GM12878 (cell line): ENCODE measurements at regions of chr19 and their contacts with region 1.

Region 1: DNA sequence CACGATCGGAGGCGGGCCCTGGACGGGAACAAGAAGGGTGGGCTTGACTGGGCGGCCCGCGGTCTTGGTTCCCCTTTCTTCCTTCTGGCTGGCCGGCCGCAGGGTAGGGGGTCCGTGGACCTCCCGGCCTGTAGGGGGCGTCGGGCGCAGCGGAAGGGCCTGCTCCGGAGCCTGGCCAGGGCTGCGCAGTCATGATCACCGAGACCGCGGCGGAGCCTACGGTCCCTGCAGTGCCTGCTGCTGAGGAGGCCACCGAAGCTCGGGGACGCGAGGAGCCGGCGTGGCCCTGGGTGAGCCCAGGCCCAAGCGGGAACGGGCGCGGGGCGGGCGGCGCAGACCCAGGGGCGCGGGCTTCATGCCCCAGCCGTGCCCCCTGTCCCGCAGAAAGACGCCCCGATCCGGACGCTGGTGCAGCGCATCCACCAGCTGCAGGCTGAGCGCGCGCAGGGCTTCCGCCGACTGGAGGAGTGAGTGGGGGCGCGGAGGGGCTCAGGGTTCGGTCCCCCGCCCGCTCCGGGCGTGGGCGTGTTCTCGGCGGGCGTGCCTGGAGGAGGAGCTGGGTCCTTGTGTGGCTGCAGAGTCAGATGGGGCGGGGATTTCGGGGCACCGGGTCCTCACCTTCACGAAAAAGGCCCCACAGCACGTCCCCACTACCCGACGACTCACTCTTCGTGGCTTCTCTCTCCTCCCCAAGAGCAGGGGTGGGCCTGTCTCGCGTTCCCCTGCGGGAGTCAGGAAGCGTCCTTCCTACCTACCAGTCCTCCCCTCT is at the start of gene REX1BD:
- DNase-seq: peak; percentile 54
- ATAC-seq: peak; percentile 92
- H3K4me3 ChIP-seq: peak within 1 kb of the TSS; percentile 70
- H3K27ac ChIP-seq: peak within 1 kb of the TSS; percentile 72
- H3K4me1 ChIP-seq: peaks cover 32% of the 10 kb centered on the region
- H3K27me3 ChIP-seq: peaks cover 0 to 2% of the 10 kb centered on the region in 2 experiments; a peak in 1 of 4 replicates
- CTCF ChIP-seq: peak; percentile 89 to 92 (median 91)
- EP300 ChIP-seq: 0 out of 4 replicates have a peak, but pooled peaks of 1 of the 2 experiments have one; percentile 3
- POLR2A ChIP-seq: peak; percentile 91
- RAD21 ChIP-seq: no peak
- polyA plus RNA-seq, gene REX1BD: 1.1 to 3.3 TPM

Region 2: DNA sequence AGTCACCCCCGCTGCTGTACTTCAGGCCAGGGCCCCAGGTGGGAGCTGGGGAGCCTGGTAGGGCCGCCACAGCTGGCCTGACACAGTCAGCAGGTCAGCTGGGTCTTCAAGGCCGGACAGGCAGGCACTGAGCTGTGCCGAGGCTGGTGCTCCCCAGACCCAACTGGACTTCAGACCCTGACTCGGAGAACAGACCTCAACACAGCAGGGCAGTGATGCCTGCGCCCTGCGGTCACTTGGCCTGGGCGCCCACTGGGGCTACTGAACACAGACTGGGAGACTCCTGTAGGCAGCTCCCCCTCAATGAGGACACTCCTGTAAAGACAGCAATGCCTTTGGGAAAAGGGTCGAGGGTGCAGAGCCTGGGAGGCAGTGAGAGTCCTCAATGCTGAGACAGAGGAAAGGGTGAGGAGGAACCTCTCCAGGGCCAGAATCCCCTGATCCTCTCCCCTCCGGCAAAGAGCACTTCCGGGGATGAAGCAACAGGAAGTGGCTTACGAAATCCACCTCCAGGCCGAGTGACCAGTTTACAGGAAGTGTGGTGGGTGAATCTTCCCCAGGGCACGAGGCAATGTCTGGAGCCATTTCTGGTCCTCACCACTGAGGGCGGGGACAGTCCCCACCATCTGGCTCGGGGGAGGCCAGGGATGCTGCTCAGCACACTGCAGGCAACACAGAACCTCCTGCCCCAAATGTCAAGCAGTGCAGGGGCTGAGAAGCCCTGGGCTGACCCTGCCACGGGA is 110.1 kb before region 1 on chr19:
- CTCF ChIA-PET with region 1: interaction called, 5 read pairs
- POLR2A ChIA-PET with region 1: no interaction called
- RAD21 ChIA-PET with region 1: no interaction called
- SMC1A ChIA-PET with region 1: interaction called, 4 read pairs
- in situ Hi-C with region 1: no loop called
- intact Hi-C with region 1: loop called (anchors 5 kb)
- DNase-seq: peak; percentile 51
- ATAC-seq: peak; percentile 96
- H3K4me3 ChIP-seq: no peak overlapping the region
- H3K27ac ChIP-seq: peak overlapping the region; percentile 89
- H3K4me1 ChIP-seq: peaks cover 33% of the 10 kb centered on the region
- H3K27me3 ChIP-seq: no peaks in the 10 kb centered on the region
- CTCF ChIP-seq: no peak
- EP300 ChIP-seq: no peak
- POLR2A ChIP-seq: peak; percentile 57
- RAD21 ChIP-seq: no peak

Region 3: DNA sequence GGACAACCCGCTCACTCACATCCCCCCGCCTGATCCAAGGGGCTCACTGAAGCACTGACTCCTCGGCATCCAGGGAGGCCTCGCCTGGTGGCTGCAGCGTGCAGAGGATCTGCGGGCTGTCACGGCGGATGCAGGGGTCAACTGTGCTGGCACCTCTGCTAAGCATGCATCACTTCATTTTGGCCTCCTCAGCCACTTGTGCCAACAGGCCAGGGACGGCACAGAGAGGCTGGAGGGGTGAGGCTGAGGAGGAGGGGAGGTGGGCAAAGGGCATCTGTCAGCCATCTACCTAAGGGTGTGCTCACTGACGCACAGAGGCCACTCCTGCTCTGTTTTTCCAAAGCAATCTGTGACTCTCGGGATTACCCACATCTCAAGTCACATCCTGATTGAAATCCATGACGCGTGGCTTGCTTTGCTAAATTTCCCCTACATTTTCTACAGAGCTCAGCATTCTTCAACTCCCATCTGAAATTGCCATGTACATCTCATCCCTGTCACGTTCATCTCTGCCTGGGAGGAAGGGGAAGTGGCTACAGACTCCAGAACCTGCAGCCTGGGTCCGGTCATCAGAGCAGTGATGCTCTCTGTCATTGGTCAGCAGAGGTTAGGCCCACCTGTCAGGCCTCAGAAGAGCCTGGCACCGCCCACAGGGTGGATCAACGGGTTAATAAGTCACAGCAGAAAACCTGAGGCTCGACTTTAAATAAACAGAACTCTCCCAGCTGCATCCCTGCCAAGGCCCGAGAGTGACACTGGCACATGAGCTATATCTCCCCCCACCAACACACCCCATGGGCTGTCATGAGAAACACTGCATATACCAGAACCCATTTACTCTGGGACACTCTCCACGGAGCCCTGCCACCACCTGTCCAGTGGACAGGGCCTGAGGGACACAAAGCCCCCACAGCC is 84.6 kb before region 1 on chr19:
- CTCF ChIA-PET with region 1: no interaction called
- POLR2A ChIA-PET with region 1: no interaction called
- RAD21 ChIA-PET with region 1: no interaction called
- SMC1A ChIA-PET with region 1: no interaction called
- in situ Hi-C with region 1: no loop called
- intact Hi-C with region 1: no loop called
- DNase-seq: no peak
- ATAC-seq: peak; percentile 75
- H3K4me3 ChIP-seq: no peak overlapping the region
- H3K27ac ChIP-seq: no peak overlapping the region
- H3K4me1 ChIP-seq: peaks cover 41% of the 10 kb centered on the region
- H3K27me3 ChIP-seq: no peaks in the 10 kb centered on the region
- CTCF ChIP-seq: no peak
- EP300 ChIP-seq: no peak
- POLR2A ChIP-seq: no peak
- RAD21 ChIP-seq: no peak

Region 4: DNA sequence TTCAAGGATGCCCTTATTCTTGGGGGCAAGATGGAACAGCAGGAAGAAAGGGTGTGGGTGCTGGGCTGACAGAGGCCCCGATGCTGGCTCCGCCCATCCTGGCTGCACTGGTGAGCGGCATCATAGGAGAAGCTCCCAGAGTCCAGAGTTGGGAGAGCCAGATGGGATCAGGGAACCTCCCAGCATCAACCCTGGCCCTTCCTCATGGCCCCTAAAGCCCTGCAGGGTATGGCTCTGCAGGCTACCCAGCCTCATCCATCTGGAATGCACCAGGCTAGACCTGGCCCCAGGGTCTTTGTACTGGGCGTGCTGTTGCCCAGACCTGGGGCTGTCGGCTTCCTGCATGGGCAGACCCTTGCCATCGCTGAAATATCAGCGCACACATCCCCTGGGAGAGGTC is 59.0 kb before region 1 on chr19:
- CTCF ChIA-PET with region 1: no interaction called
- POLR2A ChIA-PET with region 1: no interaction called
- RAD21 ChIA-PET with region 1: no interaction called
- SMC1A ChIA-PET with region 1: no interaction called
- in situ Hi-C with region 1: no loop called
- intact Hi-C with region 1: no loop called
- DNase-seq: no peak
- ATAC-seq: no peak
- H3K4me3 ChIP-seq: no peak overlapping the region
- H3K27ac ChIP-seq: no peak overlapping the region
- H3K4me1 ChIP-seq: no peaks in the 10 kb centered on the region
- H3K27me3 ChIP-seq: no peaks in the 10 kb centered on the region
- CTCF ChIP-seq: no peak
- EP300 ChIP-seq: no peak
- POLR2A ChIP-seq: no peak
- RAD21 ChIP-seq: no peak

Region 5: GRCh38 chr19:18542936-18543815 is 45.6 kb before region 1 on chr19 and contains the start of gene FKBP8:
- CTCF ChIA-PET with region 1: interaction called, 22 read pairs
- POLR2A ChIA-PET with region 1: interaction called, 27 read pairs
- RAD21 ChIA-PET with region 1: interaction called, 20 read pairs
- SMC1A ChIA-PET with region 1: interaction called, 11 read pairs
- in situ Hi-C with region 1: no loop called
- intact Hi-C with region 1: loop called (anchors 5 kb)
- DNase-seq: no peak
- ATAC-seq: peak; percentile 99
- H3K4me3 ChIP-seq: peak within 1 kb of the TSS; percentile 82
- H3K27ac ChIP-seq: peak within 1 kb of the TSS; percentile 78
- H3K4me1 ChIP-seq: peaks cover 10% of the 10 kb centered on the region
- H3K27me3 ChIP-seq: no peaks in the 10 kb centered on the region
- CTCF ChIP-seq: no peak
- EP300 ChIP-seq: no peak
- POLR2A ChIP-seq: no peak
- RAD21 ChIP-seq: no peak
- polyA plus RNA-seq, gene FKBP8: 0.13 to 1.1 TPM

Region 6: GRCh38 chr19:18557474-18558201 is 31.2 kb before region 1 on chr19 and contains the start of gene KXD1:
- CTCF ChIA-PET with region 1: interaction called, 33 read pairs
- POLR2A ChIA-PET with region 1: interaction called, 40 read pairs
- RAD21 ChIA-PET with region 1: interaction called, 25 read pairs
- SMC1A ChIA-PET with region 1: interaction called, 14 read pairs
- in situ Hi-C with region 1: no loop called
- intact Hi-C with region 1: no loop called
- DNase-seq: peak; percentile 98
- ATAC-seq: peak; percentile 97
- H3K4me3 ChIP-seq: peak within 1 kb of the TSS; percentile 95
- H3K27ac ChIP-seq: peak within 1 kb of the TSS; percentile 85
- H3K4me1 ChIP-seq: no peaks in the 10 kb centered on the region
- H3K27me3 ChIP-seq: no peaks in the 10 kb centered on the region
- CTCF ChIP-seq: no peak
- EP300 ChIP-seq: no peak
- POLR2A ChIP-seq: peak; percentile 92
- RAD21 ChIP-seq: no peak
- polyA plus RNA-seq, gene KXD1: 27.5 to 44.9 TPM

Region 7: DNA sequence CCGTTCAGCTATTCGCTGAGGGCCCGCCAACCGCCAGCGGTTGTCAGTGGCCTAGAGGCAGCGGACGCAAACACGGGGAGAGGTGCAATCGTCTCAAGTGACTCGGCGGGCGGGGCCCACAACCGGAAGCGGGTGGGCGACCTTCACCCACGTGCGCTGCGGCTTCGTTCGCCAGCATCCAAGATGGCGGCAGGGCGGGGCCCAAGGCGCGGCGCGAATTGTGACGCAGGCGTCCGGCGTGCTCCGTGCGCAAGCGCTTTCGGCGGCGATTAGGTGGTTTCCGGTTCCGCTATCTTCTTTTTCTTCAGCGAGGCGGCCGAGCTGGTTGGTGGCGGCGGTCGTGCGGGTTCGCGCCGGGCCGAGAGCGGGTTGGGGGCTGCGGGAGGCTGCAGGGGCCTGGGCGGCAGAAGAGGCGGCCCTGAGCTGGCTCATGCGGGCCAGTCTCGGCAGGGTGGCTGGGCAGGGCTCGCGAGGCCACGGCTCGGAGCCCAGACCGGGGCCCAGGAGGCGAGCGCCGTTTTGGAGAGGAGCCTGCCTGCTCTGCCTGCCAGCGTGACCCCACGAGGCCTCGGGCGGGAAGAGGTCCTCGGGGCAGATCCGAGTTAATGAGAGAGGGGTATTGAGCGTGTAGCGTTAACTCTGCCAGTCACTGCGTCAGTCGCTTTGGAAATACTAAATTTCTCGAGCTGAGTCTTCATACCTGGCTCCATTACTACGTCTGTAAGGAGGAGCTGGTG is 17.1 kb before region 1 on chr19 and contains the start of gene UBA52:
- CTCF ChIA-PET with region 1: interaction called, 24 read pairs
- POLR2A ChIA-PET with region 1: interaction called, 43 read pairs
- RAD21 ChIA-PET with region 1: interaction called, 10 read pairs
- SMC1A ChIA-PET with region 1: interaction called, 44 read pairs
- in situ Hi-C with region 1: no loop called
- intact Hi-C with region 1: no loop called
- DNase-seq: peak; percentile 92
- ATAC-seq: peak; percentile 98
- H3K4me3 ChIP-seq: peak within 1 kb of the TSS; percentile 95
- H3K27ac ChIP-seq: peak within 1 kb of the TSS; percentile 76
- H3K4me1 ChIP-seq: peaks cover 11% of the 10 kb centered on the region; the same call in 1 of the 2 replicates
- H3K27me3 ChIP-seq: no peaks in the 10 kb centered on the region
- CTCF ChIP-seq: no peak
- EP300 ChIP-seq: 0 out of 4 replicates have a peak, but pooled peaks of 1 of the 2 experiments have one; percentile 17
- POLR2A ChIP-seq: peak; percentile 99
- RAD21 ChIP-seq: no peak
- polyA plus RNA-seq, gene UBA52: 2,192 to 2,288 TPM

Region 8: GRCh38 chr19:18831524-18832305 is 242.9 kb after region 1 on chr19 and contains the start of gene UPF1:
- CTCF ChIA-PET with region 1: no interaction called
- POLR2A ChIA-PET with region 1: no interaction called
- RAD21 ChIA-PET with region 1: interaction called, 5 read pairs
- SMC1A ChIA-PET with region 1: no interaction called
- in situ Hi-C with region 1: no loop called
- intact Hi-C with region 1: loop called (anchors 5 kb)
- DNase-seq: no peak
- ATAC-seq: peak; percentile 68
- H3K4me3 ChIP-seq: peak within 1 kb of the TSS; percentile 93
- H3K27ac ChIP-seq: peak within 1 kb of the TSS; percentile 91
- H3K4me1 ChIP-seq: no peaks in the 10 kb centered on the region; the same call in 1 of the 2 replicates
- H3K27me3 ChIP-seq: no peaks in the 10 kb centered on the region
- CTCF ChIP-seq: no peak
- EP300 ChIP-seq: no peak
- POLR2A ChIP-seq: peak; percentile 93
- RAD21 ChIP-seq: no peak
- polyA plus RNA-seq, gene UPF1: 0.58 to 1.1 TPM